ENCODE measurements at regions of chr11 and their contacts with region 1.

Region 1: GRCh38 chr11:47766305-47767227 is 575 bp downstream of the FNBP4 start:
- DNase-seq: peak; percentile 73 to 89
- ATAC-seq: peak; percentile 35 to 63 (median 36)
- H3K4me3 ChIP-seq: peak overlapping the region; percentile 53
- H3K4me3 Mint-ChIP-seq: peak overlapping the region; percentile 95
- H3K27ac ChIP-seq: peak overlapping the region; percentile 92
- H3K27ac Mint-ChIP-seq: peak overlapping the region; percentile 100
- H3K4me1 ChIP-seq: peaks cover 21% of the 10 kb centered on the region
- H3K4me1 Mint-ChIP-seq: peaks cover 24 to 32% of the 10 kb centered on the region in 2 donors
- H3K27me3 ChIP-seq: no peaks in the 10 kb centered on the region
- H3K27me3 Mint-ChIP-seq: no peaks in the 10 kb centered on the region
- CTCF ChIP-seq: no peak

Region 2: DNA sequence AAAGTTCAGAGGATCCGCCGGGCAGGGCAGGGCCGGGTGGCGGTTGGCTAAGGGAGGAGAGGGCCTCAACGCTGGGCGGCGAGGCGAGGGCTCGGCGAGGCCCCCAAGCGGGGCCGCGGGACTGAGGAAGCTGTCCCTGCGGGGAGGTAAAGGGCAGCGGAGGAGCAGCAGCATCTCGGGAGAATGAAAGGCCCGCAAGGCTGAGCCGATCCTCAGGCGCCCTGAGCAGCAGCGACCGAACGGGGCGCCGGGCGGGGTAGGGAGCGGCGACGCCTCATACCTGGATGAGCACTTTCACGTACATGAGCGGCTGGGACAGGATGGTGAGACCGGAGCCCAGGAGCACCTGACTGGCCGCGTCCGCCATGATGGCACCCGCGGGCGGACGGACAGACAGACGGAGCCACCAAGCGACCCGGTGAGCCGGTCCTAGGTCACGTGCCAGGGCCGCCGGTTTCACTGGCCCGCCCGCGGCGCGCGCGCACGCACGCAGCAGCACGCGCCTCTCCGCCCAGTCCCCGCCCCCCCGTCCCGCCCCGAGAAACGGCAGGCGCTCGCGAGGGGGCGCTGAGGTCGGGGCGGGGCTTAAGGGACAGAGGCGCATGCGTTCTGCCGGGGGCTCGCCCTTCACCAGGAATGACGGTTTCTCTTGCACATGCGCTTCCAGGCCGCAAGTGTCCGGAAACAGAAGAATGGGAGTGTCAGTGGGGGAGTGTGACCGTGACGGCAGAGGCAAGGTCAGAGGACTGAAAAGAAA is 124.3 kb before region 1 on chr11 and contains the start of gene MTCH2:
- intact Hi-C with region 1: loop called (anchors 1 kb)
- DNase-seq: peak; percentile 93 to 98
- ATAC-seq: peak; percentile 92 to 99 (median 93)
- H3K4me3 ChIP-seq: peak within 1 kb of the TSS; percentile 79
- H3K4me3 Mint-ChIP-seq: peak within 1 kb of the TSS; percentile 98
- H3K27ac ChIP-seq: peak within 1 kb of the TSS; percentile 91
- H3K27ac Mint-ChIP-seq: peak within 1 kb of the TSS; percentile 92 to 95
- H3K4me1 ChIP-seq: peaks cover 15% of the 10 kb centered on the region
- H3K4me1 Mint-ChIP-seq: peaks cover 12 to 19% of the 10 kb centered on the region in 2 donors
- H3K27me3 ChIP-seq: no peaks in the 10 kb centered on the region
- H3K27me3 Mint-ChIP-seq: no peaks in the 10 kb centered on the region
- CTCF ChIP-seq: no peak
- total RNA-seq, gene MTCH2: 25.0 to 32.4 (median 31.4) TPM

Region 3: GRCh38 chr11:47786373-47786772 is 19.8 kb after region 1 on chr11:
- intact Hi-C with region 1: no loop called
- DNase-seq: no peak
- ATAC-seq: no peak
- H3K4me3 ChIP-seq: no peak overlapping the region
- H3K4me3 Mint-ChIP-seq: no peak overlapping the region
- H3K27ac ChIP-seq: no peak overlapping the region
- H3K27ac Mint-ChIP-seq: no peak overlapping the region
- H3K4me1 ChIP-seq: peaks cover 4% of the 10 kb centered on the region
- H3K4me1 Mint-ChIP-seq: peaks cover 4 to 5% of the 10 kb centered on the region in 2 donors
- H3K27me3 ChIP-seq: no peaks in the 10 kb centered on the region
- H3K27me3 Mint-ChIP-seq: no peaks in the 10 kb centered on the region
- CTCF ChIP-seq: no peak

Region 4: DNA sequence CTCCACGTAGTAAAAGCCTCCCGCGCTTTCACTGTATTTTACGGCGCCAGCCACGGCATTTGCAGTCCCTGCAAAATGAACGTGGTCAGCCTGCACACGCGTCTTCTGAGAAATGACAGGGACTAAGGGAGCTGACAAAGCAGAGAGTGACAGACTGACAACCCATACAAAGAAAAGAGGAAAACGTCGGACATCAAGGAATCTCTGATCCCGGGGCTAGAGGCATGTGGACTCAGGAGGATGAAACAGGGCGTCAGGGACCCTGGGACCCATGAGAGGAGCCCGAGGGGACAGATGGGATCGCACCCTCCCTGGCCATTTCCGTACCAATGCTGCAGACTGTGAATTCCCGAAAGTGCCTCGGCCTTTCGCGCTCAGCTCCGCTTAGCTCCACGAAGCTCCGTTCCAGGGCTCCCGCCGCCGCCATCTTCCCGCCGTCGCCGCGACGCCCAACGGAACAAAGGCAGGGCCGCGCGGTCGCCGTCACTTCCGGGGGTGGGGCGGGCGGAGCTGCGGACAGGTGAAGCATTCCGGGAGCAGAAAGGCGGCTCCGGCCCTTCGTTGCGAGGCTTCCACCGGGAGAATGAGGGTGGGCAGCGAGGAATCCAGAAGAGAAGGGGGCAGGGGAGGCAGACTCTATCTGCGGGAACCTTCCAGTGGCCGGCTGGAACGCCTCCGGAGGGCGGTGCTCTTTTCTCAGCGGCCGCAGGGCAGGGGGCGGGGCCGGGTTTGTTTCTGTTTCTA is 81.5 kb after region 1 on chr11 and contains the start of gene NUP160:
- intact Hi-C with region 1: loop called (anchors 2 kb)
- DNase-seq: peak; percentile 89 to 90
- ATAC-seq: peak; percentile 89 to 92 (median 90)
- H3K4me3 ChIP-seq: peak within 1 kb of the TSS; percentile 82
- H3K4me3 Mint-ChIP-seq: peak within 1 kb of the TSS; percentile 98
- H3K27ac ChIP-seq: peak within 1 kb of the TSS; percentile 87
- H3K27ac Mint-ChIP-seq: peak within 1 kb of the TSS; percentile 95
- H3K4me1 ChIP-seq: peaks cover 20% of the 10 kb centered on the region
- H3K4me1 Mint-ChIP-seq: peaks cover 23 to 25% of the 10 kb centered on the region in 2 donors
- H3K27me3 ChIP-seq: no peaks in the 10 kb centered on the region
- H3K27me3 Mint-ChIP-seq: no peaks in the 10 kb centered on the region
- CTCF ChIP-seq: no peak
- total RNA-seq, gene NUP160: 36.6 to 53.3 (median 43.5) TPM

Region 5: GRCh38 chr11:48001438-48002021 is 235.0 kb after region 1 on chr11:
- intact Hi-C with region 1: loop called (anchors 5 kb)
- DNase-seq: peak; percentile 76 to 96
- ATAC-seq: peak; percentile 85 to 96 (median 93)
- H3K4me3 ChIP-seq: no peak overlapping the region
- H3K4me3 Mint-ChIP-seq: peak overlapping the region; percentile 88
- H3K27ac ChIP-seq: peak overlapping the region; percentile 90
- H3K27ac Mint-ChIP-seq: peak overlapping the region; percentile 95 to 97
- H3K4me1 ChIP-seq: peaks cover 87% of the 10 kb centered on the region
- H3K4me1 Mint-ChIP-seq: peaks cover 73 to 81% of the 10 kb centered on the region in 2 donors
- H3K27me3 ChIP-seq: no peaks in the 10 kb centered on the region
- H3K27me3 Mint-ChIP-seq: no peaks in the 10 kb centered on the region
- CTCF ChIP-seq: no peak